CD4-positive, alpha-beta memory T cell (primary cell): ENCODE measurements at regions of chr3 and their contacts with region 1.

Region 1: DNA sequence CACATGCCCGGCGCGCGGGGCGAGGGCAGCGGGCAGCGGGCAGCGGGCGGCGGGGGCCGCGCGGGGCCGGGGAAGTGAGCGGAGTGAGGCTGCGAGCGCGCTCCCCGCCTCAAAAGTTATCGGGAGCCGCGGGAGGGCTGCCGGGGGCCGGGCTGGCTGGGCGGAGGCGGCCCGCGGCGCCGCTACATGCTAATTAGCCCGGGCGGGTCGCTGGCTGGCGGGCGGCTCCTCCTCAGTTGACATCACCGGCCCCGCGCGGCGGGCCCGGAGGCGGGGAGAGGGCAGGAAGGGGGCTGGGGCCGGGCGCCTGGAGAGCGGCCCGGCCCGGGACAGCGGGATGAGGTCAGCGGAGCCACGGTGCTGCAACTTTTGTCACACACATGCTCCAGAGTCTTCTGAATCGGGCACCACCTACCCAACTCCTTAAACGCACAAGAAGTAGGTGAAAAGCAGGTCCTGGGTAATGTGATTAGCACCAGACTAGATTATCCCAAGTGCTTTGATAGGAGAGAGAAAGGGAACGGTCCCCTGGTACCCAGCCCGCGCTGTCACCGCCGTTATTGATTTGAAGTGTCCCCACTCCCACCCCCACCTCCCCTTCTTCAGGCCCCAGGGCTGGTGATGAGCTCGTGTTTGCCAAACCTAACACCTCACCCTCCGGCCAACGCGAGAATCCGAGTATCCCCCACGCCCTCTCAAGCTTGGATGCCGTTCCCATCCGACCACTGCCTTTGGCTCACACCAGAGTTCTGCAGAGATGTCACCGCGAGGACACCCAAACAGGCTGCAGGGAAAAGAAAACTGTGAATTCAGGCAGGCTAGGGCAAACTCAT is at the start of gene HEG1:
- DNase-seq: peak; percentile 71 to 80 (median 72)
- H3K4me3 ChIP-seq: peak within 1 kb of the TSS; percentile 60 to 75
- H3K4me3 Mint-ChIP-seq: peak within 1 kb of the TSS; percentile 92 to 99 (median 96)
- H3K27ac ChIP-seq: peak within 1 kb of the TSS; percentile 73
- H3K27ac Mint-ChIP-seq: peak within 1 kb of the TSS; percentile 95 to 99 (median 98)
- H3K4me1 ChIP-seq: peaks cover 41% of the 10 kb centered on the region
- H3K4me1 Mint-ChIP-seq: peaks cover 32 to 42% (median 38%) of the 10 kb centered on the region in 4 donors
- H3K27me3 ChIP-seq: no peaks in the 10 kb centered on the region
- H3K27me3 Mint-ChIP-seq: peaks cover 5 to 6% of the 10 kb centered on the region in 2 donors
- total RNA-seq, gene HEG1: 20.2 to 21.7 TPM

Region 2: DNA sequence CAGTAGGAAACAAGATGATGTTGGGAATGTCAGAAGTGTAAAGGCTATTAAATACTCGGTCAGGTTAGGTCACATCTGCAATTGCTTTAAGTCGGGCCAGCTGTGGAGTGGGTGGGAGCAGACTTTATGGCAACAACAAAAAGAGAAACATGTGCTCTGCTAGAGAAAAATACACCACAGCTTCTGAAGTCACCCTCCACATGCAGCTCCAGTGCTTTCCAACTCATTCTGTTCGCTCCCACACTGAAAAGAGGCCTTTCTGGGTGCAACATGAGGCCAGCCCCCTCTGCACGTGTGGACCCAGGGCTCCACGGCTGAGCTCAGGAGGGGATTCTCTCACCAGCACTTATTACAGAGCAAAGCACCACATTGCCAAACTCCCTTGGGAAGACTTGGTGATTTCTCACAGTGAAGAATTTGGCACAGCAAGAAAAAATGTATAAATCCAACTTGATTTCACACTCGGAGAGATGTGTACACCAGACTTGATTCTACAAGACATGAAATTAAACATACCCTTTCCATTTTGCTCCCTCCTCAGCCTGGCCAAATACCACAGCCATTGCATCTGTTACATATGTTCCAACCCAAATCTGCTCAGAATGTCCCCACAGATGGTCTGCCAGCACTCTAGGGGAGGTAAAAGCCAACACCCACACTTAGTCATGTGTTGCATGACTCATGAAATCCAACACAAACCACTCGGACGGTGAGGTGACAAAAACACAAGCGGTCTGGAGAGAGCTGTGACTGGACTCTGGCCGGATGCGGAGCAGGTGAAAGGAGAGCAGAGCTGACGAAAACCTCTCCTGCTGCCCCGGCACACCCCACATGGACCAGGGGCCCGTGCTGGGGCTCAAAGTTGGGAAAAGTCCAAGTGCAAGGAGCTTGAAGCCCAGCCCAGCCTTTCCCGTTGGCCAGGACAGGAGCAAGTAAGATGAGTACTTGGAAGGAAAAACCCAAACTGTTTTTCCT is 243.6 kb before region 1 on chr3:
- CTCF ChIA-PET with region 1: no interaction called
- POLR2A ChIA-PET with region 1: no interaction called
- intact Hi-C with region 1: no loop called
- DNase-seq: no peak
- H3K4me3 ChIP-seq: no peak overlapping the region
- H3K4me3 Mint-ChIP-seq: no peak overlapping the region
- H3K27ac ChIP-seq: no peak overlapping the region
- H3K27ac Mint-ChIP-seq: no peak overlapping the region
- H3K4me1 ChIP-seq: no peaks in the 10 kb centered on the region
- H3K4me1 Mint-ChIP-seq: no peaks in the 10 kb centered on the region
- H3K27me3 ChIP-seq: no peaks in the 10 kb centered on the region
- H3K27me3 Mint-ChIP-seq: peaks cover 10 to 12% of the 10 kb centered on the region in 2 donors

Region 3: DNA sequence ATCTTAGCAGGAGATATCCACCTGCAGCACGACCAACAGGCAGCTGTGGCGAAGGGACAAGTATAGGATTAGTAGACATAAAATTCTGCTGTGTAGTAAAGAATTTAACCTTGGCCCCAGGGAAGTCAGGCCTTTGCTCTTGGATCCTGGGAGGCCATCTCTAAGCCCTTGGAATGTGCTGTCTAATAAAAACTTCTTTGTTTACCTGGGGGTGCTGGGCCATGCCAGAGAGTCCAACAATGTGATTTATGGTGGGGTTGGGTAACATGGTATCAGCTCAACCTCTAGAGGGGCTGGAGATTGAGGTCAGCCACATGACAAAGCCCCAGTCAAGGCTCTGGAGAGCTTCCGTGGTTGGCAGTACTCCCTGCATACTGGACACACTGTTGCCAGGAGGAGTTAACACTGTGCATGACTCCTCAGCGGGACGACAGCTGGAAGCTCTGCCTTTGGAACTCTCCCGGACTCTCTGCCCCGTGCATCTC is 52.7 kb before region 1 on chr3:
- CTCF ChIA-PET with region 1: interaction called, 4 read pairs
- POLR2A ChIA-PET with region 1: no interaction called
- intact Hi-C with region 1: loop called (anchors 5 kb)
- DNase-seq: no peak
- H3K4me3 ChIP-seq: no peak overlapping the region
- H3K4me3 Mint-ChIP-seq: no peak overlapping the region
- H3K27ac ChIP-seq: no peak overlapping the region
- H3K27ac Mint-ChIP-seq: peak overlapping the region in 6 of 7 donors; percentile 13 to 88 (median 76)
- H3K4me1 ChIP-seq: peaks cover 5% of the 10 kb centered on the region
- H3K4me1 Mint-ChIP-seq: peaks cover 0 to 19% (median 7%) of the 10 kb centered on the region in 4 donors
- H3K27me3 ChIP-seq: no peaks in the 10 kb centered on the region
- H3K27me3 Mint-ChIP-seq: no peaks in the 10 kb centered on the region

Region 4: GRCh38 chr3:125022186-125022585 is 33.9 kb before region 1 on chr3:
- CTCF ChIA-PET with region 1: interaction called, 4 read pairs
- POLR2A ChIA-PET with region 1: interaction called, 13 read pairs
- intact Hi-C with region 1: no loop called
- DNase-seq: no peak
- H3K4me3 ChIP-seq: no peak overlapping the region
- H3K4me3 Mint-ChIP-seq: peak overlapping the region in 4 of 8 donors; percentile 5 to 39 (median 24)
- H3K27ac ChIP-seq: no peak overlapping the region
- H3K27ac Mint-ChIP-seq: peak overlapping the region in 6 of 7 donors; percentile 2 to 63 (median 38)
- H3K4me1 ChIP-seq: peaks cover 51% of the 10 kb centered on the region
- H3K4me1 Mint-ChIP-seq: peaks cover 44 to 83% (median 50%) of the 10 kb centered on the region in 4 donors
- H3K27me3 ChIP-seq: no peaks in the 10 kb centered on the region
- H3K27me3 Mint-ChIP-seq: no peaks in the 10 kb centered on the region

Region 5: DNA sequence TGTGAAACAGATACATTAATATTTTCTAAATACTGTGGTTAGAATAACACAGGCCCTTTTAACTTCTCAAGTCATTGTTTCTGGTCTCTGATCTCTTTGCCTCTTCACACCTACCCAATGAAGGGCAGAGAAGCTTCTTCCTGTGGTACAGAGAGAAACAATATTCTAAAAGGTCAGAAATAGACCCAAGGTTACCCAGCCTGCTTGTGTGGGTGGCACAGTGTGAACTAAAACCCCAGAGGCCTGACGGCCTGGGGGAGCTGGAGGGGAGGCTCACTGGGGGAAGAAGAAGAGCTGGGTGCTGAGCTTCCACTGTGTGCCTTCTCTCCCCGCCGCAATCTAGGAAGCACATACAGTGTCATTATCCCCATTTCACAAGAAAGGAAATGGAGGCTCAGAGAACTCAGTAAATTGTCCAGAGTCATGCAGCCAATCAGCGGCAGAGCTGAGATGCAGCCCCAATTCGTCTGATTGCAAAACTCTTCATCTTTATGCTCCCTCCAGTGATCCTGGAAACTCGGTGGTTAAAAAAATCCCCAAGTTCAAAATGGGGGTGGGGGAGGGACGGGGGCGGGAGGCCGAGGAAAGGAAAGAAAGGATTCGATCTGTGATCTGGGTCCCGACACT is 63.7 kb after region 1 on chr3:
- CTCF ChIA-PET with region 1: no interaction called
- POLR2A ChIA-PET with region 1: no interaction called
- intact Hi-C with region 1: loop called (anchors 5 kb)
- DNase-seq: peak in 1 of 5 donors; percentile 12
- H3K4me3 ChIP-seq: no peak overlapping the region
- H3K4me3 Mint-ChIP-seq: peak overlapping the region in 6 of 8 donors; percentile 53 to 75 (median 70)
- H3K27ac ChIP-seq: no peak overlapping the region
- H3K27ac Mint-ChIP-seq: peak overlapping the region; percentile 11 to 74 (median 46)
- H3K4me1 ChIP-seq: peaks cover 25% of the 10 kb centered on the region
- H3K4me1 Mint-ChIP-seq: peaks cover 16 to 30% (median 23%) of the 10 kb centered on the region in 4 donors
- H3K27me3 ChIP-seq: no peaks in the 10 kb centered on the region
- H3K27me3 Mint-ChIP-seq: no peaks in the 10 kb centered on the region

Region 6: DNA sequence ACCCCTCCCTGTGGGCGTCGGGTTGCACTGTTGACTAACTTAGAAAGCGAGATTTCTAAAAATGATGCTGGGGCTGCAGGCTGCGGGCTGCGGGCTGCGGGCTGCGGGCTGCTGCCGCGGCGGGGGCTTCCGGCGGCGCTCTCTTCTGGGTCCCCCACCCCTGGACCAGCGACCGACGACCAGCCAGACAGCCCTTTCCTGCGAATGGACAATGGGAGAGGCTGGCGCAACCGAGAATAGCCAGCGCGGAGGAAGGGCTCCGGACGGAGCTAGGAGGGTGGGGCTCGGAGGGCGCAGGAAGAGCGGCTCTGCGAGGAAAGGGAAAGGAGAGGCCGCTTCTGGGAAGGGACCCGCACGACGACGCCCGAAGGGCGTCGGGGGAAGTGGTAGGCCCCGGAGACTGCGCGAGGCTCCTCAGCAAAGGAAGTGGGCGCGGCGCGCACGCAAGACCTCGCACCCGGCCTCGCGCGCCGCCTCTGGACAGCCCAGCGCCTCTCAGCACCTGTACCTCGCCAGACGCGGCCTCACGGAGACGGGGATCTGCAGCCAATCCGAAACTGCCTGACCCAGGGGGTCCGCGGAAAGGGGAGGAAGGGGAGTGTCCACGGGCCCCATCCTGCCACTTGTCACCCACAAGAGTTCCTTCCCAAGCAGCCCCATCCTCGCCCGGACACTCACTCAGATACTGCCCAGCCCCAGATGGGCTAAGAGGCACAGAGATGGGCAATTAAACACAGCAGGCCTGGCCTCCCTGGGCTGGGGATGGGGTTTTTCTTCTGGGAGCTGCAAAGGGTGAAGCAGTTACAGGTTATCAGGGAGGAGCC is 85.7 kb after region 1 on chr3:
- CTCF ChIA-PET with region 1: interaction called, 5 read pairs
- POLR2A ChIA-PET with region 1: interaction called, 8 read pairs
- intact Hi-C with region 1: loop called (anchors 1 kb)
- DNase-seq: peak; percentile 56 to 66 (median 64)
- H3K4me3 ChIP-seq: peak overlapping the region; percentile 11 to 38
- H3K4me3 Mint-ChIP-seq: peak overlapping the region; percentile 65 to 86 (median 79)
- H3K27ac ChIP-seq: peak overlapping the region; percentile 29
- H3K27ac Mint-ChIP-seq: peak overlapping the region; percentile 64 to 77 (median 70)
- H3K4me1 ChIP-seq: peaks cover 21% of the 10 kb centered on the region
- H3K4me1 Mint-ChIP-seq: peaks cover 13 to 36% (median 24%) of the 10 kb centered on the region in 4 donors
- H3K27me3 ChIP-seq: no peaks in the 10 kb centered on the region
- H3K27me3 Mint-ChIP-seq: no peaks in the 10 kb centered on the region